ENCODE measurements at regions of chr17 and their contacts with region 1.

Region 1: GRCh38 chr17:75405365-75406221 is at the start of gene GRB2:
- DNase-seq: peak; percentile 100
- H3K4me3 ChIP-seq: peak within 1 kb of the TSS; percentile 85 to 97 (median 93)
- H3K27ac ChIP-seq: peak within 1 kb of the TSS; percentile 96 to 98 (median 97)
- H3K4me1 ChIP-seq: peaks cover 12 to 36% (median 16%) of the 10 kb centered on the region in 4 donors
- H3K27me3 ChIP-seq: no peaks in the 10 kb centered on the region
- CTCF ChIP-seq: peak in 2 of 5 experiments; percentile 13 to 23
- EP300 ChIP-seq: no peak
- POLR2A ChIP-seq: peak; percentile 94
- total RNA-seq, gene GRB2: 105 to 183 (median 136) TPM

Region 2: DNA sequence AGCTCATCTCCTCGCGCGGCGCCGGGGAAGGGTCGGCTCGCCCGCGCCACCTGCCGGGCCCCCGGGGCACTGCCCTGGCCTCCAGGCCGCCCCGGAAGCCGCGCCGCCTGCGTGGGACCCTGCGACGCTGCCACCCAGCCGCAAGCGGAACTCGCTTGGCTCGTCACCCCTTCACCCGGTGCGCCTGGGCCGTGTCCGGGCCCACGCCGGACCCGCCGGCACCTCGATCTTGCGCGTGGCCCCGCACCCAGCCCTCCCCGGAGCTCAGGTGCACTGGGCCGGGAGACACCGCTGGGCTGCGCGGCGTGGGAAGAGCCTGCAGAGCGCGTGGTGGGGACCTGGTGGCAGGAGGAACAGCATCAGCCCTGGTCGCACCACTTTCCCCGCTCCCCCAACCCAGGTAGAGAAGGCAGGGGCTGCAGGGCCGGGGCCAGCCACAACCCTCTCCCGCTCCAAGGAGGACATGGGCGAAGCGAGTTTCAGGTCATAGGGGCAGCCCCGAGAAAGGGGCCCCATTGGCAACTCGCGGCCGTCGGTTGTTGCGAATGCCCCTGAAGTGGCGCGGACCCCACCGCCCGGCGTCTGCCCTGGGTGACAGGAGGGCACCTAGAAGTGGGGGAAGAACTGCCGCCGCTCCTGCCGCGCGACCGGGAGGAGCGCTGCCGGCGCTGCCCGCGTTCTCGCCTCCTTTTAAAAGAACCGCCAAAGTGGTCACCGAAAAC is 134.2 kb before region 1 on chr17:
- in situ Hi-C with region 1: no loop called
- intact Hi-C with region 1: loop called (anchors 5 kb)
- DNase-seq: peak; percentile 87
- H3K4me3 ChIP-seq: peak overlapping the region; percentile 84 to 99 (median 86)
- H3K27ac ChIP-seq: peak overlapping the region; percentile 94 to 100 (median 96)
- H3K4me1 ChIP-seq: peaks cover 12 to 31% (median 21%) of the 10 kb centered on the region in 4 donors
- H3K27me3 ChIP-seq: no peaks in the 10 kb centered on the region
- CTCF ChIP-seq: peak; percentile 26 to 81 (median 66)
- EP300 ChIP-seq: no peak
- POLR2A ChIP-seq: peak; percentile 38

Region 3: DNA sequence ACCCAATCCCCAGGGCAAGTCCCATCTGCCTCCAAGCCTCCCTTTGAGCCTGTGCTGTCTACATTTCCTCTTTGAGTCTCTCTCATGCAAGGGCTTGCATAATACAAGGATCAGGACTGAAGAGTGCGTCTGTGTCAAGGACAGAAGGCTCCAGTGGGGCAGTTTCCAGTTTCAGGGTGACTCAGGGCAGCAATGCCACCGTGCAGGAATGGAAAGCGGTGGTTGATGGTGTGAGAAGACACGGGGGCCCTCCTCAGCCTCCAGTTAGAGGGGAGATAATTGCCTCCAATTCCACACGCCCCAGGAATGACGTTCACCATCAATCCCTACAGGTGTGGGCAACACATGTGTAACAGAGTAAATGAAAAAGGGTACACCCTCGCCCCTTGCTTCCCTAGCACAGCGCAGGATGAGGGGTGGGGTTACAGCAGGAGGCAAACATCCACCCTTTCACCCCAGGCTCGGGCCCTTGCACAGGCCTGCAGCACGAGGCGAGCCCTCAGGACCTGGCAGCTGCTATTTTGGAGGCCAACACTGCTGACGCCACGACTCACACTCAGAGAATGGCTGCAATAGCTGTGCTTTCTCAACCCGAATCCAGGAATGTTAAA is 91.5 kb before region 1 on chr17:
- in situ Hi-C with region 1: loop called in 2 of 4 experiments (anchors 25 kb)
- intact Hi-C with region 1: no loop called
- DNase-seq: peak; percentile 42
- H3K4me3 ChIP-seq: no peak overlapping the region
- H3K27ac ChIP-seq: peak overlapping the region; percentile 50 to 91 (median 57)
- H3K4me1 ChIP-seq: peaks cover 0 to 27% (median 12%) of the 10 kb centered on the region in 4 donors
- H3K27me3 ChIP-seq: no peaks in the 10 kb centered on the region
- CTCF ChIP-seq: no peak
- EP300 ChIP-seq: no peak
- POLR2A ChIP-seq: peak; percentile 23

Region 4: DNA sequence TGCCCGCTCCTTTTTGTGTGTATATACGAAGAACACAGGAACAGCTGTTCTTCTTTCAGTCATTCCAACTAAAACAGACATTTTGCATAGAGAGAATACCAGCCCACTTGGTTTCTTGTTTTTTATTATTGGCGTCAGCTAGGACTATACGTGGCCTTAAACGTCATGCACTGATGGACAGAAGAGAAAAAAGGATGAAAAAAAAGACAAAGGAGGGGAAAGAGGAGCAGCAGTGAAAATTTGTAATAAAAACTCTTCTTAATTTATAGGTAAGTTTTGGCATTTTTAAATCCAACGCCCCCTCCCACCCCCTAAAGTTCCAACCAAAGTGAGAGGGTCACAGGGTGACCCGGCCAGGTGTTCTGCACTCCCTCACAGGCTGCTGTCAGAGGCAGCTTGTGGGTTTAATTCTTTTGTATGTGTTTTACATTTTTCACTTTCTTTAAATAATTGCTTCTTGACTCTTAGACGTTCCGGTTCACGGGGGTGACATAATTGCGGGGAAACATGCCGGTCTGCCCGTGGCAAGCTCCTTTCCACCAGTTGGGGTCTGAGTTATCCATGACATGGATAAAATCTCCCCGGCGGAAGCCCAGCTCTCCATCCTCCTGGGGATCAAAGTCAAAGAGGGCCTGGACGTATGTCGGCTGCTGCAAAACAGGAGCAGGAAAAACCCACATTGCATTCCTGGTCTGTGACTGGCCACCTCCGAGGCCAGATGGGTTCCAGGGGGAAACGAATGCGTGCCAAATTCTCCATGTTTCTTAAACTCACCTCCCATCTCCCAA is 85.5 kb before region 1 on chr17:
- in situ Hi-C with region 1: loop called (anchors 5 to 25 kb)
- intact Hi-C with region 1: loop called (anchors 5 kb)
- DNase-seq: peak; percentile 46
- H3K4me3 ChIP-seq: no peak overlapping the region
- H3K27ac ChIP-seq: peak overlapping the region; percentile 41 to 76 (median 46)
- H3K4me1 ChIP-seq: peaks cover 3 to 22% (median 4%) of the 10 kb centered on the region in 4 donors
- H3K27me3 ChIP-seq: no peaks in the 10 kb centered on the region
- CTCF ChIP-seq: no peak
- EP300 ChIP-seq: no peak
- POLR2A ChIP-seq: no peak

Region 5: GRCh38 chr17:75959051-75959838 is 553.7 kb after region 1 on chr17:
- in situ Hi-C with region 1: no loop called
- intact Hi-C with region 1: no loop called
- DNase-seq: no peak
- H3K4me3 ChIP-seq: no peak overlapping the region
- H3K27ac ChIP-seq: no peak overlapping the region
- H3K4me1 ChIP-seq: no peaks in the 10 kb centered on the region
- H3K27me3 ChIP-seq: no peaks in the 10 kb centered on the region
- CTCF ChIP-seq: no peak
- EP300 ChIP-seq: no peak
- POLR2A ChIP-seq: no peak

Measured in transverse colon (tissue), 4 donors.